ENCODE measurements at regions of chr6 and their contacts with region 1.

Region 1: DNA sequence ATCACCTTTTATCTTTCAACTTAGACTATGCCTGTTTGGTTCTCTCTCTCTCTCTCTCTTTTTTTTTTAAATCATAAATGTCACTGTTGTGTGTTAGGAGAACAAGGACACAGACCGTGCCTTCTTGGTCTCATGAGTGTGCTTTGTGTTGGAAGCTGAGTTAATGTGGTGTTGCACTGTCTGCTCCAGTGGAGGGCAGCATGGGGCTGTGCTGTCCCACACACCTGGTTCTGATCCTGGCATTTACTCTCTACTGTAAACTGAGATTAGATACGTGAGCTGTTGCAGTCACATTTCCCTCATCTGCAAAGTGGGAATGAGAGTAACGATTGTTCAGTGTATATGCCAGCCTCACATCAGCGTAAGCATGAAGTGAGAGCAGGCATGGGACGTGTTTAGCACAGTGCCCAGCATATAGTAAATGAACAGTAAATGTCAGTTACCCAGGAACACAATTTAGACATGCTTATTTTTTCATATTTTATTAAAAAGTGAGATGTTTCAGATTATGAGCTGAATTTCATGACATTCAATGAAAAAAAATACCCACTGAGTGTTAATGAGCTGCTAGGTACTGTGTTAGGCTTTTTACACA is 161.1 kb downstream of the FARS2 start:
- DNase-seq: peak; percentile 21
- H3K4me3 ChIP-seq: no peak overlapping the region
- H3K27ac ChIP-seq: no peak overlapping the region
- H3K27me3 ChIP-seq: no peaks in the 10 kb centered on the region
- CTCF ChIP-seq: peak; percentile 78

Region 2: DNA sequence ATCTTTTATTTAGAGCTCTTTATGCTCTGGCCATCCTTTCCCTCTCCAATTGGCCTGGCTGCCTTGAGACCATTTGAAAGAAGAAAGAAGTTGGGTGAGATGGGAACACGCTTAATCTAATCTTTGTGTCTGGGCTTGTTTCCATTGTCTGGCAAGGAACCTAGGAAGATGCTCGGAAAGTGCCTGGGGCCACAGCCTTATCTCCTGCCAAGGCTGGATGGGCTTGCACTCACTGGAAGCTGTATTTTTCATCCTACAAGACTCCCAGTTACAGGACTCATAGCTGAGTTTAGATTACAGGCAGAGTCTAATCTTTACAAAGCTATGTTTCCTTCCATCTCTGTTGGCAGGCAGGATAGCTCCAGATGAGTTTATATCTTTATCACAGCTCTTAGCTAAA is 679.4 kb before region 1 on chr6:
- CTCF ChIA-PET with region 1: no interaction called
- POLR2A ChIA-PET with region 1: no interaction called
- DNase-seq: no peak
- H3K4me3 ChIP-seq: no peak overlapping the region
- H3K27ac ChIP-seq: no peak overlapping the region
- H3K27me3 ChIP-seq: peaks cover 24% of the 10 kb centered on the region
- CTCF ChIP-seq: no peak

Region 3: DNA sequence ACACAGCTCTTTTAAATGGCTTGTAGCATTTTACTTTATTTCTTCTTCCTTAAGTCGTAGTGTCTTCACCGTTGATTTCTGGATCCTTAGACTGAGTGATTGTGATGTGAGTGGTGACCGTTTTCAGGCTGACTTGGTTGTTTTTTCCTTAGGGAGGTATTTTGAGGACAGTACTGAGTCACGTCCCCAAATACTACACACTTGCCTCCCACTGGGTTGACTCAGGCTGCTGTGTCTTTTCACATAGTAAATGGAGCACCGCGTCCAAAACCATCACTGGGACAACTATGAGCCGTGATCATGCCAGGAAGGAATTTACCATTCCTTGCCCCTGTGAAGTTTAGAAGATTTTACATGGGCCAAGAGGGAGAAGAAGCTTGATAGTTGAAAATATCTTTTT is 13.0 kb after region 1 on chr6:
- CTCF ChIA-PET with region 1: interaction called, 13 read pairs
- POLR2A ChIA-PET with region 1: no interaction called
- DNase-seq: no peak
- H3K4me3 ChIP-seq: no peak overlapping the region
- H3K27ac ChIP-seq: no peak overlapping the region
- H3K27me3 ChIP-seq: no peaks in the 10 kb centered on the region
- CTCF ChIP-seq: no peak

Region 4: GRCh38 chr6:6547110-6547879 is 1124.9 kb after region 1 on chr6:
- CTCF ChIA-PET with region 1: interaction called, 37 read pairs
- POLR2A ChIA-PET with region 1: no interaction called
- DNase-seq: peak; percentile 47
- H3K4me3 ChIP-seq: peak overlapping the region; percentile 34
- H3K27ac ChIP-seq: no peak overlapping the region
- H3K27me3 ChIP-seq: peaks cover 6% of the 10 kb centered on the region
- CTCF ChIP-seq: peak; percentile 88

Measured in AG04450 (cell line).